ENCODE measurements at regions of chr22 and their contacts with region 1.

Region 1: GRCh38 chr22:33202455-33202854 is 144.3 kb upstream of the SYN3 start:
- DNase-seq: no peak
- ATAC-seq: no peak

Region 2: DNA sequence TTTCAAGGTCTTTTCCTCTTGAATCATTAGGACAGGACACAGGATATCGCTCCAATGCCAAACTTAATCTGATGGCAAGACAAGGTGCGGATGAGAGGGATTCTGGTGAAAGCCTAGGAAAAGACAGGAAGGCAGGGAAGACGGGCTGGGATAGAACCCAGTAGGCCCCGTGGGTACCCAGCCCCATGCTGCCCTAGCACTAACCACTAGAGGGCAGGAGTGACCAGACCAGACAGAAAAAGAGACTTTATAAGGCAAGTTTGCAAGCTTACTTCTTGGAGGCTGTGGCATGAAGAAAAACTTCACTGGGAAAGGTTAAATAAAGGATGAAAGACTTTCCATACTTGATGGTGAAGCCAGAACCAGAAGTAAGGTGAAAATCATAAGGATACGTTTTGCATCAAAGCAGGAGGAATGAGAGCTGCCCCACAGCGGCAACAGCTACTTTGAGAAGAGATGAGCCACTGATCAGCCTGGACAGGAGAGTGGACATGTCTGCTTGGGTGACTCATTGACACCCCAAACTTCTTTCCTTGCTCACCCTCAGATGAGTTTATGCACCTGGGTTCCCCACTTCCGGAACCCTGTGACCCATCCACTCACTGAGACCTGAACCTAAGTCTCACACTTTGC is 184.1 kb before region 1 on chr22:
- intact Hi-C with region 1: loop called (anchors 1 kb)
- DNase-seq: no peak
- ATAC-seq: peak; percentile 82

Region 3: DNA sequence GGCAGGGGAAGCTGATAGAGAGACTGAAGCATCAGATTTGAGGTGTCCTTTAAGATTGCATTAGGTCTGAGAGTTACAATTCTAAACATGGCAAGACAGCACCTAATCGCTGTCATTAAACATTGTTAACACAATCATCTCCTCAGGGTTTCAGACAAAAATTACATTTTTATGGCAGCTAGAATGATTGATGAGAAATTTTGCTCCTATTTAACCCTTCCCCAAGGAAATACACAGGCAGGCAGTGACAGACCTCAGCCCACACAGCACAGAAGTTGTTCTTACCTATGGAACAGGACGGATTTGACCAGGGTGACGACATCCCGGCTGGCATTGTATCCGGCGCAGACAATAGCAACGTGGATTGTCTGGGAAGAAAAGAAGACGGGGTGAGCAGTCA is 423.5 kb after region 1 on chr22:
- intact Hi-C with region 1: no loop called
- DNase-seq: no peak
- ATAC-seq: no peak

Measured in Right ventricle myocardium inferior (tissue), 1 donor.